ENCODE measurements at regions of chr9 and their contacts with region 1.

Region 1: DNA sequence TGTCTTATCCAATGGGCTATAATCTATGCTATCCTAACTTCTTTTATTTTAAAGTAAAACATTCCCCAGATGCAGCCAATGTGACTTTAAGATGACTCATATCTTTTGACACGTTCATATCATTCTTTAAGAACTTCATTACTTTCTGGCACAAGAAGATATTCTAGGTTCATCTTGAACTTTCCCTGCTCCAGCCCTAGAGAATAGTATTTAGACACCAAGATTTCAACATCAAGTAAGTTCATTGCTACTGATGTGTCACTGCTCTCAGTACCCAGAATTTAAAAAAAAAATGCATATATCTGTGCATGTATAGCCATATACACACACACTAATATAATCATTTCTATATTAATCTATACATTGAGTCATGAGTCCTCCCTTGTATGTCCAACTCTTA is 175.2 kb downstream of the SAXO1 start:
- DNase-seq: no peak
- ATAC-seq: no peak

Region 2: GRCh38 chr9:18720691-18721090 is 137.1 kb before region 1 on chr9:
- intact Hi-C with region 1: no loop called
- DNase-seq: no peak
- ATAC-seq: no peak

Region 3: DNA sequence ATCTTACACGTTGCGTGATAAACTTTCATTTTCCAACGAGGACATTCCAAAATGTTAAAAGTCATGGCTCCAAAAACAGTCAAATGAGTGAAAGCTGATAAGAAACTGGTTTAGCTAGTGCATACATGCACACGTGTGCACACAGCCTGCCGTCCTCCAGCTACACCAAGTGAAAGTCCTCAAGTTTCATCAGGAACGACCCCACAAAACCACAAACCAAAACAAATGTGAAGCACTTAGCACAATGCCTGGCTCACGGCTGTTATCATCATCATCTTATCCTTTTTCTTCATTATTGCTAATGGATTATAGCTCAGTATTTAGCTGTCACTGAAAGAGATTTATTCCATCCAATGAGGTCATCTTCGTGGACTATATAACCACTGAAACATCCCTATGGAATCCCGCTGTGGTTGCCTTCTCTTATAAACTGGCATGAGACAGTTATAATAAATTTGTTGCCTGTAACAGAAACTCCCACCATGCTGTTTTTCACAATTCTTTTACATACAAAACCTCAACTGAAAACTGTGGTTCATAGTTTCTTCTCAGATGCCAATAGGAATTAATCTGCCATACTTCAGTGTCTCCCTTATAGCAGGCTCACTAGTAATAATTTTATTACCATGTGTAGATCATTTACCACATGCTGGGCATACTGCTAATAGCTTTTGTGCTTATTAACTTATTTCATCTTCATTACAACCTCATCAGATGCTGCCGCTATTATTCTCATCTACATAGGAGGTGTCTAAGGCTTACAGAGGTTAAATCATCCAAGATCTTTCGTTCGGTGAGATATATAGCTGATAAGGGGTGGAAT is 119.2 kb after region 1 on chr9:
- intact Hi-C with region 1: loop called (anchors 10 kb)
- DNase-seq: no peak
- ATAC-seq: no peak

Region 4: GRCh38 chr9:19331877-19332276 is 474.1 kb after region 1 on chr9:
- intact Hi-C with region 1: no loop called
- DNase-seq: no peak
- ATAC-seq: no peak

Measured in Right ventricle myocardium superior (tissue), 1 donor.